K562 (cell line): ENCODE measurements at regions of chr11 and their contacts with region 1.

Region 1: GRCh38 chr11:31240338-31240904 is 129.1 kb downstream of the DCDC1 start:
- DNase-seq: peak; percentile 19 to 68 (median 26)
- ATAC-seq: peak; percentile 89
- H3K4me3 ChIP-seq: no peak overlapping the region
- H3K27ac ChIP-seq: no peak overlapping the region
- H3K4me1 ChIP-seq: no peaks in the 10 kb centered on the region
- H3K27me3 ChIP-seq: no peaks in the 10 kb centered on the region
- CTCF ChIP-seq: peak; percentile 47 to 74 (median 63); a peak in 5 of 6 replicates
- EP300 ChIP-seq: no peak
- POLR2A ChIP-seq: no peak
- RAD21 ChIP-seq: peak; percentile 69 to 81

Region 2: GRCh38 chr11:31264834-31265233 is 24.4 kb after region 1 on chr11:
- CTCF ChIA-PET with region 1: no interaction called
- POLR2A ChIA-PET with region 1: no interaction called
- in situ Hi-C with region 1: no loop called
- intact Hi-C with region 1: no loop called
- DNase-seq: no peak
- ATAC-seq: no peak
- H3K4me3 ChIP-seq: no peak overlapping the region
- H3K27ac ChIP-seq: no peak overlapping the region
- H3K4me1 ChIP-seq: no peaks in the 10 kb centered on the region
- H3K27me3 ChIP-seq: no peaks in the 10 kb centered on the region
- CTCF ChIP-seq: no peak
- EP300 ChIP-seq: no peak
- POLR2A ChIP-seq: no peak
- RAD21 ChIP-seq: no peak

Region 3: GRCh38 chr11:31369348-31370329 is 129.2 kb after region 1 on chr11 and contains the starts of genes DCDC1 and DNAJC24:
- CTCF ChIA-PET with region 1: no interaction called
- POLR2A ChIA-PET with region 1: no interaction called
- in situ Hi-C with region 1: no loop called
- intact Hi-C with region 1: loop called (anchors 10 kb)
- DNase-seq: peak; percentile 85 to 96 (median 86)
- ATAC-seq: peak; percentile 99
- H3K4me3 ChIP-seq: peak within 1 kb of the TSS; percentile 62
- H3K27ac ChIP-seq: peak within 1 kb of the TSS; percentile 58
- H3K4me1 ChIP-seq: no peaks in the 10 kb centered on the region
- H3K27me3 ChIP-seq: no peaks in the 10 kb centered on the region; a peak in 1 of 5 replicates
- CTCF ChIP-seq: no peak
- EP300 ChIP-seq: no peak
- POLR2A ChIP-seq: peak; percentile 91
- RAD21 ChIP-seq: no peak
- polyA plus RNA-seq, gene DCDC1: 0.06 TPM in 1 of 2 experiments, not detected in the other
- polyA plus RNA-seq, gene DNAJC24: 12.2 to 15.8 TPM

Region 4: DNA sequence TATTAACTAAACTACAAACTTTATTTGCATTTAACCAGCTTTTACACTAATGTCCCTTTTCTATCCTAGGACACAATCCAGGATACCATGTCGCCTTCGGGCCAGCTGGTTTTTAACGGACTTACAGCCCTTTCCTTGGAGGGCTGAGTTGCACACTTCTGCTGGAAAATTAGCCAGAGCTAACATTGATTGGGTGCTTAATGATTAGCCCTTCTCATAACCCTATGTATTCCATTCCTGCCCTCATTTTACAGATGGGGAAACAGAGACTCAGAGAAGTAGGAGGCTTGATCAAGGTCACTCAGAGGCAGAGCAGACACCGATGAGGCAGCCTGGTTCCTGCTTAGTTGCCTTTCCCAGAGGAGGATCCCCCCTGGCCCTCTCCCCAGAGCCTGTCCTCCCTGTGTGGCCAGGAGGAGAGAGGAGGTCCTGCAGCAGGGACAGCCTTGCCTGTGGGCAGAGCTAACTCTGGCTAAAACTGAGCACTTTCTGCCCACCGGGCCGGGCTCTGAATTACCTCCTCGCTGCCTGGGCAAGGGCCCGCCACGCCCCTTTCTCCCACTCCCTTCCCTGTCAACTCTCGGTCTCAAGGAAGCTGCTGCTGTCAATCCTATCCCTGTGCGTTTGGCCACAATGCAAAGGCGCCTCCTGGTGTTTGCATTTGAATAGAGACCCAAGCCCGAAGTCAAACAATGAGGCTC is 630.3 kb after region 1 on chr11:
- CTCF ChIA-PET with region 1: interaction called, 9 read pairs
- POLR2A ChIA-PET with region 1: interaction called, 5 read pairs
- in situ Hi-C with region 1: loop called (anchors 10 kb)
- intact Hi-C with region 1: loop called (anchors 1 kb)
- DNase-seq: peak; percentile 32 to 66 (median 37)
- ATAC-seq: peak; percentile 92
- H3K4me3 ChIP-seq: no peak overlapping the region
- H3K27ac ChIP-seq: no peak overlapping the region
- H3K4me1 ChIP-seq: no peaks in the 10 kb centered on the region
- H3K27me3 ChIP-seq: peaks cover 5 to 12% of the 10 kb centered on the region in 2 experiments; a peak in 2 of 5 replicates
- CTCF ChIP-seq: peak; percentile 73 to 81 (median 79)
- EP300 ChIP-seq: no peak
- POLR2A ChIP-seq: no peak
- RAD21 ChIP-seq: peak; percentile 81 to 91

Region 5: GRCh38 chr11:31958076-31958735 is 717.8 kb after region 1 on chr11:
- CTCF ChIA-PET with region 1: no interaction called
- POLR2A ChIA-PET with region 1: no interaction called
- in situ Hi-C with region 1: no loop called
- intact Hi-C with region 1: loop called (anchors 2 kb)
- DNase-seq: peak; percentile 70 to 73 (median 72)
- ATAC-seq: peak; percentile 98
- H3K4me3 ChIP-seq: no peak overlapping the region
- H3K27ac ChIP-seq: no peak overlapping the region
- H3K4me1 ChIP-seq: no peaks in the 10 kb centered on the region; a peak in 1 of 5 replicates
- H3K27me3 ChIP-seq: peaks cover 0 to 3% of the 10 kb centered on the region in 2 experiments; a peak in 3 of 5 replicates
- CTCF ChIP-seq: peak; percentile 78 to 90 (median 81)
- EP300 ChIP-seq: no peak
- POLR2A ChIP-seq: no peak
- RAD21 ChIP-seq: peak; percentile 61 to 83

Region 6: GRCh38 chr11:32006799-32007388 is 766.5 kb after region 1 on chr11:
- CTCF ChIA-PET with region 1: no interaction called
- POLR2A ChIA-PET with region 1: no interaction called
- in situ Hi-C with region 1: no loop called
- intact Hi-C with region 1: loop called (anchors 5 kb)
- DNase-seq: peak; percentile 44 to 49 (median 46)
- ATAC-seq: peak; percentile 88
- H3K4me3 ChIP-seq: no peak overlapping the region
- H3K27ac ChIP-seq: no peak overlapping the region
- H3K4me1 ChIP-seq: no peaks in the 10 kb centered on the region
- H3K27me3 ChIP-seq: peaks cover 0 to 17% of the 10 kb centered on the region in 2 experiments; a peak in 2 of 5 replicates
- CTCF ChIP-seq: peak; percentile 42 to 63 (median 61); a peak in 5 of 6 replicates
- EP300 ChIP-seq: no peak
- POLR2A ChIP-seq: no peak
- RAD21 ChIP-seq: peak; percentile 47 to 57

Region 7: DNA sequence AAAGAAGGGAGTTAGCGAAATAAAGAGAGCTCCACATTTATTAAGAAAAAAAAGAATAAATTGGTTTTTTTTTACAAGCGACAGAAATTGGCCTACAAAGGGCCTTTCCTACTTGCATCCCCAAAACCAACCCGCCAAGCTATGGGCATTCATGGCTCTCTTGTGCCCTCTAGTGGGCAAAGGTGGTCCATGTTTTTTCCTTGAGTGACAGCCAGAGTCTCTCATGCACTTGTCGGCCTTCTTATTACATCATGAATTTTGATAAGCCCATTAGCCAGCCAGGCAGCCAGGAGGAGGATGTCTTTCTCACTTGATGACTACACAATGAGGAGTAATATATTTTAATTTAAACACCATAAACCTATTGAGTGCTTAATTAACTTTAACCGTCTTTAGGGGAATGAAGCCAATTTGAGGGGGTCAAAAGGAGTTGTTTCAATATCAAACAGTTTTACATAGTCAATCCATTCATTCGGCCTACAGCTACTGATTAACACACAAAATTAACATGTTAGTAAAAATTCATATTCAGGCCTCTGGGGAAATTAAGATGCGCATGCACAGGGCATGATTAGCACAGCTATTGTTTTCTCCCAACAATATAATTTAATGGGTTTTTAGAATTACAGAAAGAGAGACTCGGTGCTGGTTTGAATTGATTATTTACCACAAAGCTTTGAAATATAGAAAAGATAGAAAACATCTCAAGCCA is 936.0 kb after region 1 on chr11:
- CTCF ChIA-PET with region 1: interaction called, 7 read pairs
- POLR2A ChIA-PET with region 1: no interaction called
- in situ Hi-C with region 1: loop called (anchors 25 kb)
- intact Hi-C with region 1: loop called (anchors 2 kb)
- DNase-seq: peak; percentile 73 to 86 (median 82)
- ATAC-seq: peak; percentile 93
- H3K4me3 ChIP-seq: no peak overlapping the region
- H3K27ac ChIP-seq: no peak overlapping the region
- H3K4me1 ChIP-seq: no peaks in the 10 kb centered on the region
- H3K27me3 ChIP-seq: peaks cover under 1 to 18% of the 10 kb centered on the region in 2 experiments; a peak in 4 of 5 replicates
- CTCF ChIP-seq: peak; percentile 87 to 95 (median 88)
- EP300 ChIP-seq: no peak
- POLR2A ChIP-seq: no peak
- RAD21 ChIP-seq: peak; percentile 85 to 87

Region 8: GRCh38 chr11:32297611-32298011 is 1057.2 kb after region 1 on chr11:
- CTCF ChIA-PET with region 1: no interaction called
- POLR2A ChIA-PET with region 1: no interaction called
- in situ Hi-C with region 1: no loop called
- intact Hi-C with region 1: loop called (anchors 10 kb)
- DNase-seq: peak; percentile 3 to 34 (median 21)
- ATAC-seq: peak; percentile 28; the same call in 1 of the 3 replicates
- H3K4me3 ChIP-seq: no peak overlapping the region
- H3K27ac ChIP-seq: no peak overlapping the region
- H3K4me1 ChIP-seq: no peaks in the 10 kb centered on the region
- H3K27me3 ChIP-seq: peaks cover 0 to 4% of the 10 kb centered on the region in 2 experiments; a peak in 1 of 5 replicates
- CTCF ChIP-seq: peak in 1 of 3 experiments; percentile 9; a peak in 2 of 6 replicates
- EP300 ChIP-seq: no peak
- POLR2A ChIP-seq: no peak
- RAD21 ChIP-seq: peak; percentile 31 to 41; a peak in 3 of 4 replicates